Left ventricle myocardium superior (tissue), 1 donor: ENCODE measurements at regions of chr15 and their contacts with region 1.

Region 1: DNA sequence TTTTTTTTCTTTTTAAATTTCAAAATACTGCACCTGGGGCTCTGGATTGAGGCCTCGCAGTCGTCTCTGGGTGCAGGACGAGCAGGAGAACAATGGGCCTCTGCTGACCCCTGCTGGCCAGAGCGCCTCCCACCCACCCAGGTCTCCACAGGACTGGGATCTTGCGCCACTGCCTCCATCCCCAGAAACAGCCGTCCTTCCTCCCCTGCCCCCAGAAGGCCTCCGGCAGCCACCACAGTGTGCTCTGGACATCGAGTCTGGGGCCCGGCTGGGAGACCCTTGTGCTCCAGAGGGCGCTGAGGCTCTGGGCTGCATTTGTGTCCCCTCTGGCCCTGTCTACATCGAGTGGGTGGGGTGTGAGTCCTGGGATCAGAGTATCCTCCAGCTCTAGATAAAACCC is 6.6 kb upstream of the ACSBG1 start:
- DNase-seq: peak; percentile 92
- ATAC-seq: peak; percentile 95

Region 2: GRCh38 chr15:78177447-78177873 is 63.5 kb before region 1 on chr15:
- intact Hi-C with region 1: loop called (anchors 5 kb)
- DNase-seq: peak; percentile 64
- ATAC-seq: peak; percentile 60

Region 3: GRCh38 chr15:78308422-78309032 is 67.5 kb after region 1 on chr15:
- intact Hi-C with region 1: no loop called
- DNase-seq: peak; percentile 74
- ATAC-seq: peak; percentile 88